Pancreas (tissue), 10 donors: ENCODE measurements at regions of chr9 and their contacts with region 1.

Region 1: DNA sequence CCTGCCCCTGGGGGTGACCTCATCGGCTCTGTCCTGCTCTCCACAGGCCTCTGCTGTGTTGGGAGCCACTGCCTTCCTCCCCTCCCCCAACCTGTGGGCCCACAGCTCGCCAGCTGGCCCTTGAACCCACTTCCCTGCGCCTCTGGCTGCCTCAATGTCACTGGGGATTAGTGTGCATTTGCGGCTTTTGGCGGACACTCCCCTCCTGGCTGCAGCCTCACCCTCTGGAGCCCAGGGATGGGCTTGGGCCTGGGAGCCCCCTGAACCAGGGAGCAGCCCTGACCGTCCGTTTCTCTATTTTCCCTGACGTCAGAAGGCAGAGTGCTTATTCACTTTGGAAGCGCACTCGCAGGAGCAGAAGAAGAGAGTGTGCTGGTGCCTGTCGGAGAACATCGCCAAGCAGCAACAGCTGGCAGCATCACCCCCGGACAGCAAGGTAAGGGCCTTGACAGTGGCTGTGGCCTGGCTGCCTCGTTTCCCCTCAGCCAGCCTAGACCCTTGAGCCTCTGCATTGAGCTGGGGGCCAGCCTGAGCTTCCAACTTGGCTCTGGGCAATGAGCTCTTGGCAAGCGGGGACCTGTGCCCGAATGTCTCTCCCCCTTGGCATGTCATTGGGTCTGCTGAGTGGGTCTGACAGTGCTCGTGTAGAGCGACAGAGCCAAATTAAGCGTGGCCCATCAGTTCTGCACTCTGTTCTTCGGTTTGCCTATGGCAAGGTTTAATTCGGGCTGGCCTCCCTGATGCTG is 73.1 kb downstream of the RGS3 start:
- DNase-seq: peak in 1 of 6 donors; percentile 46
- ATAC-seq: peak; percentile 27 to 46 (median 32)
- H3K4me3 ChIP-seq: no peak overlapping the region
- H3K27ac ChIP-seq: no peak overlapping the region
- H3K4me1 ChIP-seq: no peaks in the 10 kb centered on the region
- H3K27me3 ChIP-seq: no peaks in the 10 kb centered on the region
- CTCF ChIP-seq: no peak

Region 2: GRCh38 chr9:113581865-113582697 is 45.4 kb after region 1 on chr9:
- intact Hi-C with region 1: loop called in 1 of 3 experiments (anchors 10 kb)
- DNase-seq: peak; percentile 67 to 85 (median 76)
- ATAC-seq: peak; percentile 71 to 79 (median 76)
- H3K4me3 ChIP-seq: peak overlapping the region in 2 of 4 donors; percentile 13 to 41
- H3K27ac ChIP-seq: peak overlapping the region; percentile 76 to 96 (median 82)
- H3K4me1 ChIP-seq: peaks cover 38 to 67% (median 41%) of the 10 kb centered on the region in 3 donors
- H3K27me3 ChIP-seq: no peaks in the 10 kb centered on the region
- CTCF ChIP-seq: no peak

Region 3: GRCh38 chr9:113657703-113658544 is 121.3 kb after region 1 on chr9:
- intact Hi-C with region 1: no loop called
- DNase-seq: peak; percentile 76 to 93 (median 90)
- ATAC-seq: peak; percentile 91 to 95 (median 93)
- H3K4me3 ChIP-seq: no peak overlapping the region
- H3K27ac ChIP-seq: no peak overlapping the region
- H3K4me1 ChIP-seq: no peaks in the 10 kb centered on the region
- H3K27me3 ChIP-seq: no peaks in the 10 kb centered on the region
- CTCF ChIP-seq: peak; percentile 83 to 98 (median 93)